ENCODE measurements at regions of chr18 and their contacts with region 1.

Region 1: DNA sequence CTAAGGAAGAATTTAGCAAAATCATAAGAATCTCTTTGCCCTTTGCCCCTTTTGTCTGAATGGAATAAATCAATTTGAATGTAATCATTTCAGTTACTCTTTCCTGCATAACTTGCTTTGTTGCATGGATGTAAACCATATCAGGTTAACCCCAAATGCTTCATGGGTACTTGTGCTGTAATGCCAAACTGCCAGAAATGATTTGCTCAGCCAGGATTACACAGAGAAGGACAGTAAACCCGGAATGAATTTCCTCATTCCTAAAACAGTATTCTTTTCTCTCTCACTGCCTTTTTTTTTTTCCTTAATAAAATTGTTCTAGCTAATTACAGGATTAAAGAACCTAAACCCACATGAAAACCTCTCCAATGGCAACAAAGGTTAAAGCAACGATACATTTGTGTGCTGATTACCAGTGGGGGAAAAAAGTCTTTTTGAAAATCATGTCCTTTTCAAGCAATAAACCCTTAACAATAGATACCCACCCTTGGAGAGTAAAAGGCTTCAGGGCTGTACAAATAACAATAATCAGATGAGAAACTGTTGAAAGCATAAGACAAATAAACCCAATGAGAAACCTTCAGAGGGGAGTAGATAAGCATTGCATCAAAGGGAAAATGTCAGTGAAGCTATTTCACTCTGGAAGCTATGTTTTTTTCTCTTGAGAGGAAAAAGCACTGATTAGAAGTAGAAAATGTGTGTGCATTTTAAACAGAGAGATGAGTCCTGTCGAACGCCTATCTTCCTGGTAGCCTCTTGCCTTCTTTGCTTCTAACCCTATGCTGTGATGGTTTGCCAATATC is 275.3 kb downstream of the CDH2 start:
- DNase-seq: no peak
- ATAC-seq: no peak
- H3K4me3 Mint-ChIP-seq: no peak overlapping the region
- H3K27ac Mint-ChIP-seq: no peak overlapping the region
- H3K4me1 Mint-ChIP-seq: no peaks in the 10 kb centered on the region
- H3K27me3 Mint-ChIP-seq: no peaks in the 10 kb centered on the region

Region 2: DNA sequence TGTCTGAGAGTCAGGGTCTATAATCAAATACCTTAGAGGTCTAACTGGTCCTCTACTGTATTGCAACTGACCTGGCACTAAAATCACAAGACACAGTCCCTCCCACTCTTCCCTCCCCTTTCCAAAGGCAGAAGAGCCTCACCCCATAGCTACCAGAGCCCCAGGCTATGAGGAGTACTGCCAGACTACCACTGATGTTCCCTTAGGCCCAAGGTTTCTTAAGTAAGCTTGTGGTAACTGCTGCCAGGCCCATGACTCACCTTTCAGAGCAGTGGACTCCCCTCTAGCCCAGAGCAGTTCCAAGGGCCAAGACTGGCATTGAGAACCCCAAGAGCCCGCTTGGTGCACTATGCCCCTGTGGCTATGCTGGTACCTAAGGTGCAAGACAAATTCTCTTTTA is 1947.5 kb after region 1 on chr18:
- CTCF ChIA-PET with region 1: no interaction called
- POLR2A ChIA-PET with region 1: interaction called, 10 read pairs
- DNase-seq: no peak
- ATAC-seq: no peak
- H3K4me3 Mint-ChIP-seq: no peak overlapping the region
- H3K27ac Mint-ChIP-seq: no peak overlapping the region
- H3K4me1 Mint-ChIP-seq: no peaks in the 10 kb centered on the region
- H3K27me3 Mint-ChIP-seq: no peaks in the 10 kb centered on the region

Measured in activated CD8-positive, alpha-beta T cell treated with anti-CD3 and anti-CD28 coated beads, Interleukin-2, amount 10 ng/mL, durations not matched to agents 7 days and 5 days (primary cell).